ENCODE measurements at regions of chr12 and their contacts with region 1.

Region 1: GRCh38 chr12:110555577-110556406 is 27.3 kb downstream of the PPTC7 start:
- DNase-seq: no peak
- H3K4me3 Mint-ChIP-seq: no peak overlapping the region
- H3K27ac Mint-ChIP-seq: no peak overlapping the region
- H3K4me1 Mint-ChIP-seq: peaks cover 20% of the 10 kb centered on the region
- H3K27me3 Mint-ChIP-seq: no peaks in the 10 kb centered on the region
- CTCF ChIP-seq: no peak

Region 2: GRCh38 chr12:110508071-110508586 is 47.7 kb before region 1 on chr12:
- CTCF ChIA-PET with region 1: no interaction called
- intact Hi-C with region 1: loop called (anchors 1 kb)
- DNase-seq: no peak
- H3K4me3 Mint-ChIP-seq: no peak overlapping the region
- H3K27ac Mint-ChIP-seq: no peak overlapping the region
- H3K4me1 Mint-ChIP-seq: no peaks in the 10 kb centered on the region
- H3K27me3 Mint-ChIP-seq: no peaks in the 10 kb centered on the region
- CTCF ChIP-seq: no peak

Region 3: DNA sequence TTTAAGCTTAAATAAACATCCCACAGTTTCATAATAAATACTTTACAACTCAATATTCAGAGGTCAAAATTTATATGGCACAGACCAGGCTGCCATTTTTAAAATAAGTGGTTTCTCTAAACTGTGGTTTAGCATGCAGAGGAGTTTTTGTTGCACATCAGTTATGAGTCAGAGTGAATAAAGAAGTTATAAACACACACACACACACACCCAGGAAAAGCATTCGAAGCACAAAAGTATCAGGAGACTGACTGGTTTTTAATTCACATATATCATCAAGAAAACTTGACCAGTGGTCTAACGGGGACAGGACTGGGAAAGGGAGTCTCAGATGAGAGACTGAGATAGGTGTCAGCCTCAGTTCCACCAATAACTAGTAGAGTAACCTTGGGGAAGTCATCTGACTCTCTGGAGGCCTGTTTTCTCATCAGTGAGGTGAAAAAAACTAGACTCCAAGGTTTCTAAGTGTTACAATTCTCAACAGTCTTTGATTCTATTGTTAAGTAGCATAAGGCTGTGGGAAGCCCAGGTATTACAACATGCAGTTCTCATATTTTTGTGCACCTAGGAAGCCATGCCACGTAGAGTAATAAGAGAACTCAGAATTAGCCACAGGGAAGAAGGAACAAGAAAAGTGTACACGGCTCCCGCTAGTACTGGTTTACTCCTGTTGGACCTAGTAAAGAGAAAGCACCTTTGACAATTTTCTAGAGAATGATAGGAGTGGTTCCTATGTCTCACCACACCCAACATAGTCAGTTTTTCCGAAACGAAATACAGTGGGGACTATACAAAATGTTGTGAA is 22.1 kb after region 1 on chr12:
- CTCF ChIA-PET with region 1: no interaction called
- intact Hi-C with region 1: loop called (anchors 1 kb)
- DNase-seq: peak; percentile 62
- H3K4me3 Mint-ChIP-seq: peak overlapping the region; percentile 50
- H3K27ac Mint-ChIP-seq: peak overlapping the region; percentile 94
- H3K4me1 Mint-ChIP-seq: peaks cover 44% of the 10 kb centered on the region
- H3K27me3 Mint-ChIP-seq: no peaks in the 10 kb centered on the region
- CTCF ChIP-seq: no peak